Tibial artery (tissue), 4 donors: ENCODE measurements at regions of chr1 and their contacts with region 1.

Region 1: DNA sequence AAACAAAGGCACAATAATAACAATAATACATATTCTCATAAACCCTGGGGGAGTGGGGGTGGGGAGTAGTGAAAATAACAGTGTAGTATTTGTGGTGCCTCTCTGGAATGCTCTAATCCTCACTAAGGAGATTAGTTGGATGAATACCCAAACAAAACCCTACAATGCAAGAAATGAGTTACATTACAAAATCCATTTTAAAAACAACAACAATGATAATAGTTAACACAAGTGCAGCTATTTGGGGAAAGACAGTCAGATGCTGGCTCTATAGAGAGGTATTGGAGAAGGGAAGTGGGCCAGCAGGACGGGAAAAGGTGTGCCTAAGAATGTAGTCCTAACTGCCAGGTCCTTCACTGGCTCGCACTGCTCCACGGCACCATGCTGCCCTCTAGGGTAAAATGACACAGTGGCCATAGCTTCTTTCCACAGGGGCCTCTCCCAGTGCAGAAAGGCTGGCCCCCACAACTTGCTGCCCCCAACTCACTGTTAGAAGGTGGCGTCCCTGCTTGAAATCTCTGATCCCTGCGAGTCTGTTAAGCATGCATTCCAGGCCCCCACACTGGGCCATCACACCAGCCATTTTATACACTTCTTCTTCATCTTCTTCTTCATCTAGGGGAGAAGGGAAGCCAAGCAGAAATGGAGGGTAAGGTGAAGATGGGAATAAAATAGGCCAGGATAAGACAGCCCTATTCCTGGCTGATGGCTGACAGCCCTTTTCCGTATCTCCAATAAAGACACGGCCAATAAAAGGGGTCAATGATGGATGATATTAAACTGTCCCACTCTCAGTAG is 113.8 kb downstream of the UBR4 start:
- DNase-seq: no peak
- H3K4me3 ChIP-seq: no peak overlapping the region
- H3K27ac ChIP-seq: no peak overlapping the region
- H3K4me1 ChIP-seq: peaks cover 0 to 17% (median 6%) of the 10 kb centered on the region in 4 donors
- H3K27me3 ChIP-seq: no peaks in the 10 kb centered on the region
- CTCF ChIP-seq: peak; percentile 24 to 37

Region 2: GRCh38 chr1:18883636-18884418 is 212.4 kb before region 1 on chr1:
- intact Hi-C with region 1: loop called (anchors 5 kb)
- DNase-seq: peak; percentile 75 to 82
- H3K4me3 ChIP-seq: no peak overlapping the region
- H3K27ac ChIP-seq: no peak overlapping the region
- H3K4me1 ChIP-seq: no peaks in the 10 kb centered on the region
- H3K27me3 ChIP-seq: no peaks in the 10 kb centered on the region
- CTCF ChIP-seq: peak; percentile 89 to 90

Region 3: DNA sequence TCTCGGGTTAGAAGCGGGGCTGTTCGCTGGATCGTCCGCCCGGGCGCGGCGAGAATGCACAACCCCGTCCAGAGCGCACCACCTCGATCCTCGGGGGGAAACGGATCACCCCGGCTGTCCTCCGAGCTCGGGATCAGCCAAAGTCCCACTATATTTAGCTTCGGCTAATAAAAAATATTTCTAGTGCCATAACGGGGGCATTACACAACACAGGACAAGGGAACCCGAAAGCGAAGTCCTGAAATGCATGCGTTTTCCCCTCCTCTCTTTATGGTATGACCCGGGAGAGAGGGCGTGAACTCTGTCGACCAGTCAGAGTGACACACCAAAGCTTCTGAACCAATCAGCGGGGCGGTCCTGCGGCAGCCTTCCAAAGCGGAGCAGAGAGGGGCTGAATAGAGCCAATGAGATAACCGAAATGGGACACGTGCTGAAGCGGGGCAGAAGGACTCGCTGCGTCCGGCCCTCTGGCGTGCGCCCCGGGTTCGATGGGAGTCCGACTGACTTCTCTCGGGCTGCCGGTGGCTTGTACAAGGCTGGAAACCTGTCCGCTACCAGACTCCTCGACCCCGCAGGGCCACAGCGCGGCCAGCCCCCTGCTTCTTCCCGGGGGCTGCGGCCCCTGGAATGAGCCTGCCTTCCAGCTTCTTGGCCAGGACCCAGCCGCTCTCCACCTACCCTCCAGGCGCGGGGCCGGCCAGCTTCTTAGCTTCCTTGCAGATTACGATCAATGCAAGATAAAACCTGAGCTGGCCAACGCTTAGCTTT is 193.5 kb before region 1 on chr1 and contains the start of gene ALDH4A1:
- intact Hi-C with region 1: loop called (anchors 5 kb)
- DNase-seq: peak; percentile 99
- H3K4me3 ChIP-seq: peak within 1 kb of the TSS; percentile 68 to 87
- H3K27ac ChIP-seq: peak within 1 kb of the TSS; percentile 88 to 90
- H3K4me1 ChIP-seq: peaks cover 7 to 35% (median 27%) of the 10 kb centered on the region in 4 donors
- H3K27me3 ChIP-seq: no peaks in the 10 kb centered on the region
- CTCF ChIP-seq: peak in 1 of 2 experiments; percentile 8

Region 4: GRCh38 chr1:19010995-19011844 is 85.0 kb before region 1 on chr1:
- intact Hi-C with region 1: loop called (anchors 10 kb)
- DNase-seq: peak; percentile 78 to 94
- H3K4me3 ChIP-seq: no peak overlapping the region
- H3K27ac ChIP-seq: peak overlapping the region; percentile 52 to 81
- H3K4me1 ChIP-seq: peaks cover 5 to 39% (median 27%) of the 10 kb centered on the region in 4 donors
- H3K27me3 ChIP-seq: no peaks in the 10 kb centered on the region
- CTCF ChIP-seq: no peak

Region 5: GRCh38 chr1:19156676-19157075 is 60.4 kb after region 1 on chr1:
- intact Hi-C with region 1: no loop called
- DNase-seq: peak in 1 of 2 donors; percentile 40
- H3K4me3 ChIP-seq: no peak overlapping the region
- H3K27ac ChIP-seq: no peak overlapping the region
- H3K4me1 ChIP-seq: no peaks in the 10 kb centered on the region
- H3K27me3 ChIP-seq: no peaks in the 10 kb centered on the region
- CTCF ChIP-seq: no peak

Region 6: DNA sequence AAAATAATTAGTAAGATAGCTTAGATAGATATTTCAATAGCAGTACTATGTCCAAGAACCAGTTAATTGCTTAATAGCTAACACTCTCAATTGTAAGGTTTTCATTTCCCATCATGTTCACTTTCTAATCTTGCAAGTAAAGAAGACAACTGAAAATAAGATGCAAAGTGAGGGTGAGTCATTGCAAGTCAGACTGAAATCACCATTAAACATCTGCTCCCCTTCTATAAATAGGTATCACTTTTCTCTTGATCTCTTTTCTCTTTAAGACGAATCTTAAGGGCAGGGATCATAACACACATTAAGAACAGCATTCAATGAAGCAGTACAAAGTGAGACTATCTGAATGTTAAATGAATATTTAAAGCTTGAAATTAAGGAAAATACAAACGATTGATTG is 73.4 kb after region 1 on chr1:
- intact Hi-C with region 1: no loop called
- DNase-seq: no peak
- H3K4me3 ChIP-seq: no peak overlapping the region
- H3K27ac ChIP-seq: no peak overlapping the region
- H3K4me1 ChIP-seq: no peaks in the 10 kb centered on the region
- H3K27me3 ChIP-seq: no peaks in the 10 kb centered on the region
- CTCF ChIP-seq: no peak

Region 7: GRCh38 chr1:19762175-19762779 is 666.0 kb after region 1 on chr1:
- intact Hi-C with region 1: no loop called
- DNase-seq: no peak
- H3K4me3 ChIP-seq: no peak overlapping the region
- H3K27ac ChIP-seq: no peak overlapping the region
- H3K4me1 ChIP-seq: peaks cover 0 to 23% (median 6%) of the 10 kb centered on the region in 4 donors
- H3K27me3 ChIP-seq: no peaks in the 10 kb centered on the region
- CTCF ChIP-seq: peak; percentile 40 to 45